ENCODE measurements at regions of chr17 and their contacts with region 1.

Region 1: DNA sequence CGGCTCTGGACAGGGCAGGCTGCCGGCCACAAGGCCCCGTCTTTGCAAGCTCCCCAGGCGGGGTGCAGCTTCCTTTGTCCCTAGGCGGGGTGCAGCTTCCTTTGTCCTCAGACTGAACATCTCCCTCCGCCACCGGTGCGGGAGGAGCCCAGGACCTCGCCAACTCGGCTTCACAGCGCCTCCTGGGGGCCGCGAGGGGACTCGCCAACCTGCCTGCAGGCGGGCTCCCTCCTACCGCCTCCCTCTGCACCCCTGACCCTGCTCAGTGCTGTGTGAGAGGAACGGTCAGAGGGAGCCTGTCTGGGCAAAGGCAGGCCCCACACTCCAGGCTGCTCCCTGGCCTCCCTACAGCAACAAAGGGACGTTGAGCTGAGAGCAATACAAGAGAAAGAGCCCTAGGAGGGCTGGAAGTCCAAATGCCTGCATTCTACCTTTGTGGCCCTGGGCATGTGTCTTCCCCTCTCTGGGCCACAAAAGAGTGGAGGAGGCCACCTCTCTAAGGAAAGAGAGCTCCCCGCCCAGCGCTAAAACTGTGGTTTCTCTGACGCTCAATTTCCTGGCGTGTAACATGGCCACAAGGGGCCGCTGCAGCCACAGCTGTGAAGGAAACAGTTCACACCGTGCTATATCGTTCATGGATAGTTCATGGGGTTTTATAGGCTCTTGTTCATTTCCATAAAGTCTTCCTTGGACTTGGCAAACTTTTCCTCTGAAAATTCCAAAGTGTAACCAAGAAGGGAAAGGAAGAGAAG is 20.9 kb upstream of the KRT19 start:
- DNase-seq: peak; percentile 99
- H3K4me3 Mint-ChIP-seq: peak overlapping the region; percentile 62
- H3K27ac Mint-ChIP-seq: peak overlapping the region; percentile 92
- H3K4me1 Mint-ChIP-seq: peaks cover 91% of the 10 kb centered on the region
- H3K27me3 Mint-ChIP-seq: no peaks in the 10 kb centered on the region
- CTCF ChIP-seq: peak; percentile 98

Region 2: GRCh38 chr17:40903129-40904065 is 645.6 kb before region 1 on chr17:
- CTCF ChIA-PET with region 1: interaction called, 32 read pairs
- intact Hi-C with region 1: no loop called
- DNase-seq: peak; percentile 82
- H3K4me3 Mint-ChIP-seq: peak overlapping the region; percentile 51
- H3K27ac Mint-ChIP-seq: peak overlapping the region; percentile 92
- H3K4me1 Mint-ChIP-seq: peaks cover 86% of the 10 kb centered on the region
- H3K27me3 Mint-ChIP-seq: no peaks in the 10 kb centered on the region
- CTCF ChIP-seq: no peak

Region 3: GRCh38 chr17:41322094-41322902 is 226.7 kb before region 1 on chr17:
- CTCF ChIA-PET with region 1: interaction called, 26 read pairs
- intact Hi-C with region 1: loop called (anchors 2 kb)
- DNase-seq: no peak
- H3K4me3 Mint-ChIP-seq: no peak overlapping the region
- H3K27ac Mint-ChIP-seq: no peak overlapping the region
- H3K4me1 Mint-ChIP-seq: peaks cover 23% of the 10 kb centered on the region
- H3K27me3 Mint-ChIP-seq: no peaks in the 10 kb centered on the region
- CTCF ChIP-seq: peak; percentile 80

Region 4: GRCh38 chr17:41496820-41497408 is 52.1 kb before region 1 on chr17:
- CTCF ChIA-PET with region 1: interaction called, 33 read pairs
- intact Hi-C with region 1: loop called (anchors 2 kb)
- DNase-seq: peak; percentile 97
- H3K4me3 Mint-ChIP-seq: no peak overlapping the region
- H3K27ac Mint-ChIP-seq: peak overlapping the region; percentile 40
- H3K4me1 Mint-ChIP-seq: peaks cover 77% of the 10 kb centered on the region
- H3K27me3 Mint-ChIP-seq: no peaks in the 10 kb centered on the region
- CTCF ChIP-seq: peak; percentile 96

Region 5: DNA sequence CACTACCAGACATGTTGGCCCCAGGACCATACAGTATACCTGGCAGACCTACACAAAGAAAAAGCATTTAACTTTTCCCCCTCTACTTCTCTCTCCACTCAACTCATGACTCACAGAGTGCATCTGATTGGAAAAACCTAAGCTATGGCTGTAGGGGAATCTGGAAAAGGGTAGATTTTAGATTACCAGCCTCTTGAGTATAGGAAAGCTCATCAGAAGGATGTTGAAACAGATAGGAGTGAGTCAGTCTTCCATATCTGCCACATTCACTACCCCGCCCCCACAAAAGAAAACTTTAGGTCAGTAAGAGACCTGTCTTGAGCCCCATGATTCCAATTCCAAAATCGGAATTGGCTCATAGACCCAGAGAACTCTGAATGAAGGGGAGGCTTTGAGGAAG is 10.5 kb after region 1 on chr17:
- CTCF ChIA-PET with region 1: interaction called, 17 read pairs
- intact Hi-C with region 1: no loop called
- DNase-seq: no peak
- H3K4me3 Mint-ChIP-seq: no peak overlapping the region
- H3K27ac Mint-ChIP-seq: no peak overlapping the region
- H3K4me1 Mint-ChIP-seq: peaks cover 11% of the 10 kb centered on the region
- H3K27me3 Mint-ChIP-seq: peaks cover 14% of the 10 kb centered on the region
- CTCF ChIP-seq: no peak

Region 6: DNA sequence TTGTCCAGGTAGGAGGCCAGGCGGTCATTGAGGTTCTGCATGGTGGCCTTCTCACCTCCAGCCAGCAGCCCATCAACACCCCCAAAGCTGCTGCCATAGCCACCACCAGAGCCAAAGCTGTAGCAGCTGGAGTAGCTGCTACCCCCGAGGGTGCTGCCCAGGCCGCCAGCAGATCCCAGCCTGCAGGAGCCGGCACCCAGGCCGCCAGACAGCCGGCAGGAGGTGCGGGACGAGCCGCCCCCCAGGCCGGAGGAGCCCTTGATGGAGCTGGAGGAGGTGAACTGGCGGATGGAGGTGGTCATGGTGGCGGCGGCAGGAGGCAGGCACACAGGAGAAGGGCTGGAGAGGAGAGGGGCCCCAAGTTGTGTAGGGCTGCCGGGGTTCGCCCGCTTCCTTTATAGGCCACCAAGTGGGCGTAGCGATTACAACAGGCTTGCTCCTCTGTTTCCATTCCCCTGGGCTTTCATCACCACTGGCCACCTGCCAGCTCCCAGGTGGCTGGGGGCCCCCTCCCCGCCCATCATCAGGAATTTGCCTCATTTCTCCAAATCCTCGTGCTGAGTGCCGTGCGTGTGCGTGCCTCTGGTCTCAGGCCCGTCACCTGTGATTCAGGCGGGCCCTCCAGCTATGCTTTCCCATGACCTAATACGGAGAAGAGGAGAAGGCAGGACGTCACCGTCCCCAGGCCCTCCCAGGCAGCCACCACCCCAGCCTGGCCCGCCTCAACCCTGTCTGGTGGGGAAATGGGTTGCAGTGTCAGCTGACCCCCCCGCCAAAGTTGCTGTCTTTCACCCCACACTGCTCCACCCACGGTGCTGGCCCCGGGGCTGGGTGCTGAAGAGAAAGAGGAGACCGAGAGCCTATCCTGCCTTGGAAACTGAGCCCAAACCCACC is 75.4 kb after region 1 on chr17 and contains the start of gene KRT17:
- CTCF ChIA-PET with region 1: interaction called, 23 read pairs
- intact Hi-C with region 1: no loop called
- DNase-seq: peak; percentile 96
- H3K4me3 Mint-ChIP-seq: peak within 1 kb of the TSS; percentile 66
- H3K27ac Mint-ChIP-seq: peak within 1 kb of the TSS; percentile 85
- H3K4me1 Mint-ChIP-seq: peaks cover 56% of the 10 kb centered on the region
- H3K27me3 Mint-ChIP-seq: no peaks in the 10 kb centered on the region
- CTCF ChIP-seq: peak; percentile 57
- total RNA-seq, gene KRT17: 472 and 593 TPM in 2 replicates

Region 7: GRCh38 chr17:41678907-41679739 is 130.1 kb after region 1 on chr17:
- CTCF ChIA-PET with region 1: interaction called, 16 read pairs
- intact Hi-C with region 1: no loop called
- DNase-seq: peak; percentile 80
- H3K4me3 Mint-ChIP-seq: peak overlapping the region; percentile 69
- H3K27ac Mint-ChIP-seq: peak overlapping the region; percentile 96
- H3K4me1 Mint-ChIP-seq: peaks cover 62% of the 10 kb centered on the region
- H3K27me3 Mint-ChIP-seq: no peaks in the 10 kb centered on the region
- CTCF ChIP-seq: peak; percentile 14

Measured in Calu3 (cell line).